Naive thymus-derived CD4-positive, alpha-beta T cell (primary cell): ENCODE measurements at regions of chr11 and their contacts with region 1.

Region 1: DNA sequence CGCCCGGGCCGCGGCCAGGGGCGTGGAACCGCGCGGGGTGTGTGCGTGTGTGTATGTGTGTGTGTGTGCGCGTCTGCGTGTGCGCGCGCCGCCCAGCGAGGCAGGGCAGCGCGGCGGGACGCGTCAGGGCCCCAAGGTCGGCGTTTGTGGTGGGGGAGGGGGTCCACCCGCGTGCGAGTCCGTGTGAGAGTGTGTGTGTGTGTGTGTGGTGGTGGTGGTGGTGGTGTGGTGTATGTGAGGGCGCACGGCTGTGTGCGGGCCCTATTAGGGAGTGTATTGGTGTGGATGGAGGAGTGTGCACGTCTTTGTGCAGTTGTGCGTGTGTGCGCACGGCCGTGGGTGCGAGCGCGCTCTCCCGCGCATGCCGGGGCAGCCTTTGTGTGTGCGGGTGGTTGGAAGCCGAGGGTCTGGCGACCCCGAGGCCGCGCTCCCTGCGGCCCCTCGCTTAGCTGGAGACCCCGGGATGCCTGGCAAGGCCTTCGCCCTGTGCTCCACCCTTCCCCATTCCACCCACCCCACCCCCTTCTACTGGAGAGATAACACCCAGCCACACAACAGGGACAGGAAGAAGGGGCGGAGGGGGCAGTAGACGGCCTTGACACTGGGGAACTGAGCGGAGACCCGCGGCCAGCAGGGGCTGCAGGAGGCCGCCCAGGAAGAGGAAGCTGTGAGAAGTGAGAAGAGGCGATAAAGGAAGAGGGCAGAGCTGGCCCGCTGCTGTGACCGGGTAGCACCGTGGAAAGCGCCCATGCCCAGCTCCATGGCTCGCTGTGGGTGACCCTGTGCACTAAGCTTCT is 528 bp upstream of the ARRB1 start:
- DNase-seq: peak; percentile 49 to 75 (median 70)
- ATAC-seq: peak; percentile 80
- H3K4me3 ChIP-seq: peak overlapping the region; percentile 87
- H3K4me3 Mint-ChIP-seq: peak overlapping the region; percentile 84 to 96 (median 94)
- H3K27ac ChIP-seq: peak overlapping the region; percentile 74
- H3K27ac Mint-ChIP-seq: peak overlapping the region; percentile 80 to 96 (median 92)
- H3K4me1 ChIP-seq: peaks cover 9 to 53% of the 10 kb centered on the region in 2 donors
- H3K4me1 Mint-ChIP-seq: peaks cover 64 to 82% (median 72%) of the 10 kb centered on the region in 7 donors
- H3K27me3 ChIP-seq: no peaks in the 10 kb centered on the region
- H3K27me3 Mint-ChIP-seq: peaks cover 0 to 3% (median 0%) of the 10 kb centered on the region in 5 donors

Region 2: GRCh38 chr11:75142714-75143419 is 209.1 kb before region 1 on chr11:
- CTCF ChIA-PET with region 1: no interaction called
- POLR2A ChIA-PET with region 1: no interaction called
- intact Hi-C with region 1: no loop called
- DNase-seq: peak; percentile 24 to 75 (median 48)
- ATAC-seq: peak; percentile 89
- H3K4me3 ChIP-seq: peak overlapping the region; percentile 29
- H3K4me3 Mint-ChIP-seq: peak overlapping the region; percentile 21 to 84 (median 52)
- H3K27ac ChIP-seq: peak overlapping the region; percentile 49
- H3K27ac Mint-ChIP-seq: peak overlapping the region; percentile 71 to 92 (median 88)
- H3K4me1 ChIP-seq: peaks cover 20 to 24% of the 10 kb centered on the region in 2 donors
- H3K4me1 Mint-ChIP-seq: peaks cover 32 to 48% (median 40%) of the 10 kb centered on the region in 7 donors
- H3K27me3 ChIP-seq: no peaks in the 10 kb centered on the region
- H3K27me3 Mint-ChIP-seq: peaks cover 0 to 14% (median 0%) of the 10 kb centered on the region in 5 donors

Region 3: GRCh38 chr11:75328426-75329277 is 23.3 kb before region 1 on chr11:
- CTCF ChIA-PET with region 1: interaction called, 33 read pairs
- POLR2A ChIA-PET with region 1: interaction called, 94 read pairs
- intact Hi-C with region 1: loop called (anchors 1 kb)
- DNase-seq: peak in 8 of 9 donors; percentile 44 to 82 (median 66)
- ATAC-seq: peak; percentile 92
- H3K4me3 ChIP-seq: no peak overlapping the region
- H3K4me3 Mint-ChIP-seq: peak overlapping the region; percentile 9 to 75 (median 68)
- H3K27ac ChIP-seq: peak overlapping the region; percentile 58
- H3K27ac Mint-ChIP-seq: peak overlapping the region; percentile 79 to 96 (median 91)
- H3K4me1 ChIP-seq: peaks cover 16 to 54% of the 10 kb centered on the region in 2 donors
- H3K4me1 Mint-ChIP-seq: peaks cover 47 to 88% (median 80%) of the 10 kb centered on the region in 7 donors
- H3K27me3 ChIP-seq: no peaks in the 10 kb centered on the region
- H3K27me3 Mint-ChIP-seq: no peaks in the 10 kb centered on the region

Region 4: DNA sequence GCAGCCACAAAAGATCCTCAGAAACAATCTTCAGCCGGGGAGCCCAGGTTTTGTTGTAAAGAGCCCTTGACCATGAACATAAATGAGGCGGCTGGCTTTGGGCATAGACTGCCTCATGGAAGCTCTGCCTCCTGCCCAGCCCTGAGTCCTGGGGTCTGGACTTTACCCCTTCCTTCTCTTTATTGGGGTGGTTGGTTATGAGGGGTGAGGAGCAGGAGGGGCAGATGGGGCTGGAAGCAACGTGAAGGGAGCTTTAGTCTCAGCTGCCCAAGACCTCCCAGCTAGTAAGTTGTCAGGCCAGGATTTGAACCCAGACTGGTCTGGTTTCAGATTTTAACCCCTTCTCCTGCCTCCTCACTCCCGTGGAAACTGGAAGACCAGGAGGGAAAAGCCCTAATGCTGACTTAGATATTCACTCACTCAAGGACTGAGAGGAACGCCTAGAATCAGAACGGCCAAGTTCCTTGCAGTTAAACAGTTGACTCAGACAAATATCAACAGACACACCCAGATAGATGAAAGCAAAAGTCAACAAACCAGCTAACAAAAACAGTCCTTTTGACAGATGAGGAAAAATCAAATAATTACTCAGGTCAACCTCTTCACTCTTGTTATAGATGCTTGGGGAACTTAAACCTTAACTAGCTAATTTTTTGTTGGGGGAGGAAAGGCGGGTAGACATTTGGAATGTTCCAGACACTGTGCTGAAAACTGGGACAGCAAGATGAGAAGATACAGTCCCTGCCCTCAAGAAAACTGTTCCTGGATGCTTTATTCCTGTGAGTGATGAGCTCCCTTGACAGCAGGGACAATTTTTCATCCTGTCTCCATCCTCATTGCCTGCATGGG is 20.2 kb after region 1 on chr11:
- CTCF ChIA-PET with region 1: no interaction called
- POLR2A ChIA-PET with region 1: interaction called, 6 read pairs
- intact Hi-C with region 1: loop called in 1 of 2 experiments (anchors 2 kb)
- DNase-seq: no peak
- ATAC-seq: no peak
- H3K4me3 ChIP-seq: no peak overlapping the region
- H3K4me3 Mint-ChIP-seq: no peak overlapping the region
- H3K27ac ChIP-seq: no peak overlapping the region
- H3K27ac Mint-ChIP-seq: peak overlapping the region in 2 of 9 donors; percentile 21 to 28
- H3K4me1 ChIP-seq: no peaks in the 10 kb centered on the region
- H3K4me1 Mint-ChIP-seq: peaks cover 0 to 36% (median 7%) of the 10 kb centered on the region in 7 donors
- H3K27me3 ChIP-seq: no peaks in the 10 kb centered on the region
- H3K27me3 Mint-ChIP-seq: no peaks in the 10 kb centered on the region

Region 5: DNA sequence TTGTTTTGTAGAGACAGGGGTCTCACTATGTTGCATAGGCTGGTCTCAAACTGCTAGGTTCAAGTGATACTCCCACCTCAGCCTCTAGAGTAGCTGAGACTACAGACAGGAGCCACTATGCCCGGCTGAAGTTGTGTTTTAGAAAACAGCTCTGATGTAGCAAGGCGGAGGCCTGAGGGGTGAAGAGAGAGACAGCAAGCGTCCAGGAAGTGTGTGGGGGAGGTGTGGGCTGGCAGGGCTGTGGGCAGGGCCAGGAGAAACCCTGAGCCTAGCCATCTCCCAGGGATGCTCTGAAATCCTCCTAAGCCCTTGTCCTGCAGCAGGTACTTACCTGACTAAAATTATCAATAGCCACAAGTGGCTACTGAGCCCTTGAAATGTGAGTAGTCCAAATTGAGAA is 31.3 kb after region 1 on chr11:
- CTCF ChIA-PET with region 1: interaction called, 36 read pairs
- POLR2A ChIA-PET with region 1: interaction called, 16 read pairs
- intact Hi-C with region 1: loop called (anchors 1 to 2 kb)
- DNase-seq: peak in 7 of 9 donors; percentile 30 to 55 (median 41)
- ATAC-seq: peak; percentile 78
- H3K4me3 ChIP-seq: no peak overlapping the region
- H3K4me3 Mint-ChIP-seq: peak overlapping the region; percentile 15 to 80 (median 58)
- H3K27ac ChIP-seq: peak overlapping the region; percentile 57
- H3K27ac Mint-ChIP-seq: peak overlapping the region; percentile 65 to 93 (median 88)
- H3K4me1 ChIP-seq: peaks cover 6 to 17% of the 10 kb centered on the region in 2 donors
- H3K4me1 Mint-ChIP-seq: peaks cover 16 to 31% (median 25%) of the 10 kb centered on the region in 7 donors
- H3K27me3 ChIP-seq: no peaks in the 10 kb centered on the region
- H3K27me3 Mint-ChIP-seq: peaks cover 0 to 10% (median 0%) of the 10 kb centered on the region in 5 donors